Sigmoid colon (tissue), 7 donors: ENCODE measurements at regions of chr13 and their contacts with region 1.

Region 1: DNA sequence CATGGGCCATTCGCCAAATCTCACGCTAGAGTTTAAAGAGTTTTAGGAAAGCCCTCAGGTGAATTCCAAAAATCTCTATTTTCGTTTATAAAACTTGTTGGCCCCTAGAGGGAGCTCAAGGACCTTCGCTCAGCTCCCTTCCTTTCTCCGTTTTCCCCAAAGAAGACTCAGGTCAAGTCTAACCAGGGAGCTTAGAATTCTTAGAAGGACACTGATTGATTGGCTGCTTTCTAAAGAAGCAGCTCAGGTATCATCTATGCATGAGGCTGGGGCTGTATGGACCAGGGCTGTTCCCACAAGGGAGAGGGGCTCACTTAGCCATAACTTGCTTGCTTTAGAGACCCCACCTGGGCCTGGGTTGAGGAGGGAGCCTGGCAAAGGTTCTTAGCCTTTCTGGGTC is 20.5 kb downstream of the DZIP1 start:
- DNase-seq: no peak
- H3K4me3 ChIP-seq: no peak overlapping the region
- H3K27ac ChIP-seq: no peak overlapping the region
- H3K4me1 ChIP-seq: peaks cover 0 to 6% (median 5%) of the 10 kb centered on the region in 4 donors
- H3K27me3 ChIP-seq: no peaks in the 10 kb centered on the region
- CTCF ChIP-seq: peak; percentile 37 to 59 (median 44)
- EP300 ChIP-seq: no peak
- POLR2A ChIP-seq: no peak

Region 2: DNA sequence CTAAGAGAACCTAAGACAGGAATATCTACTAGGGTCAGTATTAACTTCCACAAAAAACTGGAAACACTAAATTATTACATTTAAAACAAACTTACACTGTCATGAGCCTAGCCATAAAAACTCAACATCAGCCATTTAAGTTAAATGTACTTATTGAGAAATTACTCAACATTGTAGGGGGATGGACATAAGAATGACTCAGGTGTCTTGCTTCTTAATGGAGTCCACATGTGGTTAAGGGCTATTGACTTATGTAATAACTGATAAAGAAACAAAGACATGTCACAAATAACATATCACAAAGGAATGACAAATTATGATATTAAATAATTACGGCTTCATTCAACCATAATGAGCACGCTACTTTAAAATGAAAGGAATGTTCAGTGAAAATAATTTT is 35.3 kb before region 1 on chr13:
- intact Hi-C with region 1: no loop called
- DNase-seq: no peak
- H3K4me3 ChIP-seq: no peak overlapping the region
- H3K27ac ChIP-seq: no peak overlapping the region
- H3K4me1 ChIP-seq: no peaks in the 10 kb centered on the region
- H3K27me3 ChIP-seq: no peaks in the 10 kb centered on the region
- CTCF ChIP-seq: no peak
- EP300 ChIP-seq: no peak
- POLR2A ChIP-seq: no peak

Region 3: GRCh38 chr13:95660981-95661581 is 37.1 kb after region 1 on chr13:
- intact Hi-C with region 1: loop called (anchors 5 kb)
- DNase-seq: no peak
- H3K4me3 ChIP-seq: no peak overlapping the region
- H3K27ac ChIP-seq: no peak overlapping the region
- H3K4me1 ChIP-seq: no peaks in the 10 kb centered on the region
- H3K27me3 ChIP-seq: no peaks in the 10 kb centered on the region
- CTCF ChIP-seq: no peak
- EP300 ChIP-seq: no peak
- POLR2A ChIP-seq: no peak

Region 4: DNA sequence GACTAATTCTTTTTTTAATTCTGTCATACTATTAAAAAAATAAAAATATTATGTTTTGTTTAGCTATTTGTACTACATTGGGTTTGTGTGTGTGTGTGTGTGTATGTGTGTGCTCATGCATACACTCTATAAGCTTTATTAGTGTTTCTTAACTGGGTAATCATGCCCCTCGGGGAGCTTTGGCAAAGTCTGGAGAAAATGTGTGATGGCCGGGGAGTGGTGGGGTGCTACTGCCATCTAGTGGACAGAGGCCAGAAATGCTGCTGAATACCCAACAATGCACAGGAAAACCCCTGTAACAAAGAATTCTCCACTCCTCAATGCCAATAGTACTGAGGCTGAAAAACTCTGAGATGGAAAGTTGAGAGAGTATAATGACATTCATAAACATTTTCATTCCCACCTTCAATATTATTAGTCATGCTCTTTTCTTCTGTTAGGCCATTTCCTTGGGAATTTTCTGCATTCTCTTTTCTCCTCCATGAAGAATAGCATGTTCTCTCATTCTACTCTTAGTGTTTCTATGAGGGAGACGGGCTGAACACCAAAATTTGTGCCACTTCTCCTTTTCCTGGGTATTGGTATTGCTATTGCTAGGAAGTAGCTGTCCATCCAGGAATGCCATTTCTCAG is 210.2 kb after region 1 on chr13:
- intact Hi-C with region 1: loop called (anchors 1 kb)
- DNase-seq: peak; percentile 74
- H3K4me3 ChIP-seq: no peak overlapping the region
- H3K27ac ChIP-seq: no peak overlapping the region
- H3K4me1 ChIP-seq: peaks cover 0 to 6% (median 2%) of the 10 kb centered on the region in 4 donors
- H3K27me3 ChIP-seq: no peaks in the 10 kb centered on the region
- CTCF ChIP-seq: peak; percentile 72 to 88 (median 83)
- EP300 ChIP-seq: no peak
- POLR2A ChIP-seq: no peak